CD4-positive, alpha-beta memory T cell (primary cell): ENCODE measurements at regions of chr15 and their contacts with region 1.

Region 1: DNA sequence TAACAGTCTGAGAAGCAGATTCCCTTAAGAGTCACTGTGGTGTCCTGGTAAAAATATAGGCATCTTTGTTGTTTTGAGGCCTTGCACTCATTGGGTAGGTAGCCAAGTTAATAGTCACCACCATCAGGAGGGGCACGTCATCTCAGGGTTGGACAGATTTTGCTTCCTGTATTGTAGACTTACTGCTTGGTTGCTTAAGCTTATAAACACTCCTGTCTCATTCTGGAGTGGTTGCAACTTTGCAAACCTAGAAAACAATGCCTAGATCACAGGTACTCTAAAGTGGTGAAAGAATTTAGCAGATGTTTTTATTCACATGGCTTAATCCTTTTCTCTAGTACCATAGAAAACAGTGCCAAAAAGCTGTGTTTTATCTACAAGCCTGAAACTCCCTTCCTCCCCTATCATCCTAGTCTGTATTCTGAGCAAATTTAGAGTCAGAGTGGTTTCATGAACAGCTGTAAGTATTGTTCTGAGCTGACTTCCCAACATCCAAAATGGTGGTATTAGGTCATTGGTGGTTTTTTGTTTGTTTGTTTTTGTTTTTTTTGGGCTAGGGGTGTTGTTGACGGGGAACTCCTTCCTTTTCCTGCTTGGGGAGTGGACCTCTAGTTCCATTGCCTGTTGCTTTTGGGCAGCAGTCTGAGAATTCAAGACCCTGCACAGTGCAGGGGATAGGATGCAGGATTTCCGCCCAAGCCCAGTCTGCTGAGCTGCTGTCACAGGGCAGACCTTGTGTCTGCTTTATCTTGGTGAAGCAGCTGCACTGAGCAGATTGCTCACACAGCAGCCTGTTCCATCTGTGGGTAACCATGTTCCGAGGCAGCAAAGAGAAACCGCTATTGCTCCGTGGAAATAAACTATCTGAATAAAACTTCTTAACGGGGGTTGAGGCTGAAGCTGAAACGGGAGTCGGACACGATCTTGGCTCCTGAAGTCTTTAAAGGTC is 202.0 kb downstream of the AKAP13 start:
- DNase-seq: peak; percentile 68 to 84 (median 76)
- H3K4me3 ChIP-seq: peak overlapping the region; percentile 74 to 92
- H3K4me3 Mint-ChIP-seq: peak overlapping the region; percentile 87 to 95 (median 89)
- H3K27ac ChIP-seq: peak overlapping the region; percentile 72
- H3K27ac Mint-ChIP-seq: peak overlapping the region; percentile 92 to 99 (median 98)
- H3K4me1 ChIP-seq: peaks cover 79% of the 10 kb centered on the region
- H3K4me1 Mint-ChIP-seq: peaks cover 63 to 82% (median 72%) of the 10 kb centered on the region in 4 donors
- H3K27me3 ChIP-seq: no peaks in the 10 kb centered on the region
- H3K27me3 Mint-ChIP-seq: no peaks in the 10 kb centered on the region

Region 2: GRCh38 chr15:85296615-85297402 is 285.6 kb before region 1 on chr15:
- CTCF ChIA-PET with region 1: no interaction called
- POLR2A ChIA-PET with region 1: no interaction called
- intact Hi-C with region 1: loop called (anchors 1 kb)
- DNase-seq: peak; percentile 67 to 75 (median 72)
- H3K4me3 ChIP-seq: peak overlapping the region in 1 of 2 donors; percentile 20
- H3K4me3 Mint-ChIP-seq: peak overlapping the region in 7 of 8 donors; percentile 1 to 70 (median 65)
- H3K27ac ChIP-seq: no peak overlapping the region
- H3K27ac Mint-ChIP-seq: peak overlapping the region in 4 of 7 donors; percentile 24 to 73 (median 27)
- H3K4me1 ChIP-seq: peaks cover 6% of the 10 kb centered on the region
- H3K4me1 Mint-ChIP-seq: peaks cover 8 to 15% (median 10%) of the 10 kb centered on the region in 4 donors
- H3K27me3 ChIP-seq: no peaks in the 10 kb centered on the region
- H3K27me3 Mint-ChIP-seq: peaks cover 0 to under 1% of the 10 kb centered on the region in 2 donors

Region 3: GRCh38 chr15:85625856-85626255 is 43.5 kb after region 1 on chr15:
- CTCF ChIA-PET with region 1: interaction called, 4 read pairs
- POLR2A ChIA-PET with region 1: interaction called, 45 read pairs
- intact Hi-C with region 1: no loop called
- DNase-seq: peak; percentile 66 to 77 (median 68)
- H3K4me3 ChIP-seq: peak overlapping the region in 1 of 2 donors; percentile 12
- H3K4me3 Mint-ChIP-seq: peak overlapping the region; percentile 13 to 83 (median 78)
- H3K27ac ChIP-seq: peak overlapping the region; percentile 39
- H3K27ac Mint-ChIP-seq: peak overlapping the region; percentile 82 to 97 (median 93)
- H3K4me1 ChIP-seq: peaks cover 65% of the 10 kb centered on the region
- H3K4me1 Mint-ChIP-seq: peaks cover 59 to 79% (median 73%) of the 10 kb centered on the region in 4 donors
- H3K27me3 ChIP-seq: no peaks in the 10 kb centered on the region
- H3K27me3 Mint-ChIP-seq: no peaks in the 10 kb centered on the region

Region 4: GRCh38 chr15:85667491-85668424 is 85.4 kb after region 1 on chr15:
- CTCF ChIA-PET with region 1: no interaction called
- POLR2A ChIA-PET with region 1: interaction called, 14 read pairs
- intact Hi-C with region 1: no loop called
- DNase-seq: peak; percentile 79 to 91 (median 90)
- H3K4me3 ChIP-seq: no peak overlapping the region
- H3K4me3 Mint-ChIP-seq: peak overlapping the region; percentile 47 to 81 (median 60)
- H3K27ac ChIP-seq: peak overlapping the region; percentile 81
- H3K27ac Mint-ChIP-seq: peak overlapping the region; percentile 80 to 100 (median 97)
- H3K4me1 ChIP-seq: peaks cover 25% of the 10 kb centered on the region
- H3K4me1 Mint-ChIP-seq: peaks cover 18 to 28% (median 22%) of the 10 kb centered on the region in 4 donors
- H3K27me3 ChIP-seq: no peaks in the 10 kb centered on the region
- H3K27me3 Mint-ChIP-seq: no peaks in the 10 kb centered on the region

Region 5: GRCh38 chr15:85702321-85703101 is 120.1 kb after region 1 on chr15:
- CTCF ChIA-PET with region 1: interaction called, 3 read pairs
- POLR2A ChIA-PET with region 1: interaction called, 24 read pairs
- intact Hi-C with region 1: loop called (anchors 5 kb)
- DNase-seq: peak; percentile 39 to 76 (median 56)
- H3K4me3 ChIP-seq: peak overlapping the region; percentile 21 to 54
- H3K4me3 Mint-ChIP-seq: peak overlapping the region; percentile 68 to 86 (median 76)
- H3K27ac ChIP-seq: peak overlapping the region; percentile 82
- H3K27ac Mint-ChIP-seq: peak overlapping the region; percentile 94 to 98 (median 97)
- H3K4me1 ChIP-seq: peaks cover 87% of the 10 kb centered on the region
- H3K4me1 Mint-ChIP-seq: peaks cover 60 to 87% (median 71%) of the 10 kb centered on the region in 4 donors
- H3K27me3 ChIP-seq: no peaks in the 10 kb centered on the region
- H3K27me3 Mint-ChIP-seq: no peaks in the 10 kb centered on the region